ENCODE measurements at regions of chr3 and their contacts with region 1.

Region 1: DNA sequence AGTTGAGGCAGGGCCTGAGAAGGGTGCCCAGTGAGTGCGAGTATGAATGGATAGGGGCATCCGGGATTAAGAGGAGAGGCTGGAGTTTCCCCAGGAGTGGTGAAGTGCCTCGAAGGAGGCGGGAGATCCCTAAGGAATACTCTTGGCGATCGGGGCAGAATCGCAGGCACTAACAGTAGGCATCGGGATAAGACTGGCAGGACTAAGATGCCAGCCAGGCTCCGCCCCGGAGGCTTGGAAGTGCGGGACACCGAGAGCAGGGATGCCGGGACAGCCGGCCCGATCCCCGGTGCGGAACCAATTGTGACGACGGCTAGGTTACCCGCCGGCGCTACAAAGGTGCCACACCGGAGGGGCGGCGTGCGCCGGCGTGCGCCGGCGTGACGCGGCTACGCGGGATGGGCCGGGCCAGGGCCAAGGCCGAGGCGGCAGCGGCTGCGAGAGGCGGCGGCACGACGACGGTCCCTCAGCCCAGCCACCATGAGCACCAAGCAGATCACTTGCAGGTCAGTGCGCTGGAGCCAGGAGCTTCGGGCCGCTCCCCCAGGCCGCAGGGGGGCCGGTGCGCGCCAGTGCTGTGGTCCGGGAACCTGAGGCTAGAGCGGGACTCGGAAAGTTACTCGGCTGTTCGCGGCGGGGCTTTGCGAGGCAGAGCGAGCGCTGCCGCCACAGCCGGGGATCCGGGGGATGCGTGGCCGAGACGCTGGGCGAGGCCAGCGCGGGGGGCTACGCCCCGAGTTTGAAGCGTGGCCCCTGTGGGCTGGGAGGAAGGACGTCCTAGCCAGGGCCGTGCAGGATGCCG is at the start of gene MKRN2:
- DNase-seq: peak; percentile 68 to 93 (median 82)
- ATAC-seq: peak; percentile 93
- H3K4me3 ChIP-seq: peak within 1 kb of the TSS; percentile 85
- H3K4me3 Mint-ChIP-seq: peak within 1 kb of the TSS; percentile 93
- H3K27ac ChIP-seq: peak within 1 kb of the TSS; percentile 85 to 91
- H3K27ac Mint-ChIP-seq: peak within 1 kb of the TSS; percentile 81
- H3K4me1 ChIP-seq: peaks cover 44% of the 10 kb centered on the region
- H3K4me1 Mint-ChIP-seq: peaks cover 69% of the 10 kb centered on the region
- H3K27me3 ChIP-seq: peaks cover 17 to 27% of the 10 kb centered on the region in 2 experiments
- H3K27me3 Mint-ChIP-seq: peaks cover 38% of the 10 kb centered on the region
- CTCF ChIP-seq: no peak
- total RNA-seq, gene MKRN2: 19.0 to 20.3 TPM

Region 2: DNA sequence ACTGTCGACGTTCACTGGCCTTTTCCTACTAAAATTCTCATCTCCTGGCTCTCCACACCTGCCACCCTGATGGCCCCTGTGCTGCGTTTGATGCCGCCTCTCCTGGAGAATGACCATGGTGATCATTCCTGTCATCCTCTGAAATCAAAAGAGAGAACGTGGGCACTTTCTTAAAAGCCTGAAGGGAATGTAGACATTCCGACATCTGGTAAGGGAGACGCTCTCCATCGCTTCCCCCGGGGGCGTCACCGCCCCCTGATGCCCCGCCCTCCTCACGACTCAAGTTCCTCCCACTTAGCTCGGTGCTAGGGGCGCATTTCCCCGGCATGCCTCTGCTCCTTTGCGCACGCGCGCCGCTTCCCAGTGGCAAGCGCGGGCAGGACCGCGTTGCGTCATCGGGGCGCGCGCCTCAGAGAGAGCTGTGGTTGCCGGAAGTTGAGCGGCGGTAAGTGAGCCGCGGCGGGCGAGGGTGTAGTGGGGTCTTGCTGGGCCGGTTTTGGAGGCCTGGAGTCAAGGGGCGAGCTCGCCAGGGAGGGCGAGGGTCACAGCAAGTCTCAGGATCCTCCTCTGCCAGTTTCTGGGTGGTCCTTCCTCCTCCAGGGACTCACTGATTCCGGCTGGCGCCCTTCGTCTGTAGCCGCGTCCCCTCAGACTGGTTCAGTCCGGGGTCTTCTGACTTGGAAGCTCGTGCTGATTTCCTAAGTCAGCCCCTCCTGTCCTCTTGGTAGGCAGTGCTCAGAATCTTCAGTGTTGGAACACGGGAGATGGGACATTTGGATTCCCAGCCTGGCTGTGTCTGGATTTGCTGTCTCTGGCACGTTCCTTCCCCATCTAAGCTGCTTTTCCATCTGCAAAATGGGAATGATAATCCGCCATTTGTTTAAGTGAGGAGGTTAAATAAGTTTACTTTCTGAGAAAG is 1284.6 kb before region 1 on chr3 and contains the start of gene ATG7:
- CTCF ChIA-PET with region 1: no interaction called
- POLR2A ChIA-PET with region 1: no interaction called
- intact Hi-C with region 1: loop called in 1 of 2 experiments (anchors 10 kb)
- DNase-seq: peak; percentile 92 to 99 (median 96)
- ATAC-seq: peak; percentile 96
- H3K4me3 ChIP-seq: peak within 1 kb of the TSS; percentile 90
- H3K4me3 Mint-ChIP-seq: peak within 1 kb of the TSS; percentile 98
- H3K27ac ChIP-seq: peak within 1 kb of the TSS; percentile 78 to 90
- H3K27ac Mint-ChIP-seq: peak within 1 kb of the TSS; percentile 98
- H3K4me1 ChIP-seq: peaks cover 24% of the 10 kb centered on the region
- H3K4me1 Mint-ChIP-seq: peaks cover 54% of the 10 kb centered on the region
- H3K27me3 ChIP-seq: no peaks in the 10 kb centered on the region
- H3K27me3 Mint-ChIP-seq: no peaks in the 10 kb centered on the region
- CTCF ChIP-seq: no peak
- total RNA-seq, gene ATG7: 21.4 to 25.7 TPM

Region 3: GRCh38 chr3:12484198-12484974 is 72.5 kb before region 1 on chr3 and contains the start of gene TSEN2:
- CTCF ChIA-PET with region 1: no interaction called
- POLR2A ChIA-PET with region 1: interaction called, 6 read pairs
- intact Hi-C with region 1: loop called in 1 of 2 experiments (anchors 1 kb)
- DNase-seq: peak; percentile 92 to 99 (median 96)
- ATAC-seq: peak; percentile 96
- H3K4me3 ChIP-seq: peak within 1 kb of the TSS; percentile 87
- H3K4me3 Mint-ChIP-seq: peak within 1 kb of the TSS; percentile 97
- H3K27ac ChIP-seq: peak within 1 kb of the TSS; percentile 72 to 81
- H3K27ac Mint-ChIP-seq: peak within 1 kb of the TSS; percentile 97
- H3K4me1 ChIP-seq: peaks cover 29% of the 10 kb centered on the region
- H3K4me1 Mint-ChIP-seq: peaks cover 52% of the 10 kb centered on the region
- H3K27me3 ChIP-seq: no peaks in the 10 kb centered on the region
- H3K27me3 Mint-ChIP-seq: no peaks in the 10 kb centered on the region
- CTCF ChIP-seq: no peak
- total RNA-seq, gene TSEN2: 8.0 to 8.2 TPM

Region 4: GRCh38 chr3:12719984-12720898 is 163.4 kb after region 1 on chr3:
- CTCF ChIA-PET with region 1: no interaction called
- POLR2A ChIA-PET with region 1: no interaction called
- intact Hi-C with region 1: loop called in 1 of 2 experiments (anchors 5 kb)
- DNase-seq: peak; percentile 52 to 90 (median 64)
- ATAC-seq: peak; percentile 97
- H3K4me3 ChIP-seq: peak overlapping the region; percentile 3
- H3K4me3 Mint-ChIP-seq: peak overlapping the region; percentile 48
- H3K27ac ChIP-seq: no peak overlapping the region
- H3K27ac Mint-ChIP-seq: no peak overlapping the region
- H3K4me1 ChIP-seq: peaks cover 5% of the 10 kb centered on the region
- H3K4me1 Mint-ChIP-seq: peaks cover 11% of the 10 kb centered on the region
- H3K27me3 ChIP-seq: no peaks in the 10 kb centered on the region
- H3K27me3 Mint-ChIP-seq: peaks cover 5% of the 10 kb centered on the region
- CTCF ChIP-seq: peak; percentile 96

Region 5: GRCh38 chr3:12830785-12831156 is 273.9 kb after region 1 on chr3:
- CTCF ChIA-PET with region 1: no interaction called
- POLR2A ChIA-PET with region 1: no interaction called
- intact Hi-C with region 1: loop called in 1 of 2 experiments (anchors 10 kb)
- DNase-seq: no peak
- ATAC-seq: no peak
- H3K4me3 ChIP-seq: no peak overlapping the region
- H3K4me3 Mint-ChIP-seq: no peak overlapping the region
- H3K27ac ChIP-seq: no peak overlapping the region
- H3K27ac Mint-ChIP-seq: no peak overlapping the region
- H3K4me1 ChIP-seq: no peaks in the 10 kb centered on the region
- H3K4me1 Mint-ChIP-seq: no peaks in the 10 kb centered on the region
- H3K27me3 ChIP-seq: no peaks in the 10 kb centered on the region
- H3K27me3 Mint-ChIP-seq: no peaks in the 10 kb centered on the region
- CTCF ChIP-seq: no peak

Region 6: GRCh38 chr3:12967606-12968351 is 410.9 kb after region 1 on chr3:
- CTCF ChIA-PET with region 1: no interaction called
- POLR2A ChIA-PET with region 1: no interaction called
- intact Hi-C with region 1: loop called in 1 of 2 experiments (anchors 10 kb)
- DNase-seq: peak; percentile 82 to 97 (median 88)
- ATAC-seq: peak; percentile 95
- H3K4me3 ChIP-seq: peak overlapping the region; percentile 47
- H3K4me3 Mint-ChIP-seq: peak overlapping the region; percentile 80
- H3K27ac ChIP-seq: no peak overlapping the region
- H3K27ac Mint-ChIP-seq: peak overlapping the region; percentile 67
- H3K4me1 ChIP-seq: peaks cover 65% of the 10 kb centered on the region
- H3K4me1 Mint-ChIP-seq: peaks cover 78% of the 10 kb centered on the region
- H3K27me3 ChIP-seq: no peaks in the 10 kb centered on the region
- H3K27me3 Mint-ChIP-seq: no peaks in the 10 kb centered on the region
- CTCF ChIP-seq: no peak